Activated CD8-positive, alpha-beta T cell treated with anti-CD3 and anti-CD28 coated beads for 36 hours (primary cell): ENCODE measurements at regions of chr1 and their contacts with region 1.

Region 1: GRCh38 chr1:42173155-42173933 is 8.8 kb upstream of the GUCA2A start:
- DNase-seq: peak; percentile 72
- ATAC-seq: peak; percentile 92
- H3K4me3 Mint-ChIP-seq: no peak overlapping the region
- H3K27ac Mint-ChIP-seq: no peak overlapping the region
- H3K4me1 Mint-ChIP-seq: no peaks in the 10 kb centered on the region
- H3K27me3 Mint-ChIP-seq: no peaks in the 10 kb centered on the region
- CTCF ChIP-seq: peak; percentile 91

Region 2: DNA sequence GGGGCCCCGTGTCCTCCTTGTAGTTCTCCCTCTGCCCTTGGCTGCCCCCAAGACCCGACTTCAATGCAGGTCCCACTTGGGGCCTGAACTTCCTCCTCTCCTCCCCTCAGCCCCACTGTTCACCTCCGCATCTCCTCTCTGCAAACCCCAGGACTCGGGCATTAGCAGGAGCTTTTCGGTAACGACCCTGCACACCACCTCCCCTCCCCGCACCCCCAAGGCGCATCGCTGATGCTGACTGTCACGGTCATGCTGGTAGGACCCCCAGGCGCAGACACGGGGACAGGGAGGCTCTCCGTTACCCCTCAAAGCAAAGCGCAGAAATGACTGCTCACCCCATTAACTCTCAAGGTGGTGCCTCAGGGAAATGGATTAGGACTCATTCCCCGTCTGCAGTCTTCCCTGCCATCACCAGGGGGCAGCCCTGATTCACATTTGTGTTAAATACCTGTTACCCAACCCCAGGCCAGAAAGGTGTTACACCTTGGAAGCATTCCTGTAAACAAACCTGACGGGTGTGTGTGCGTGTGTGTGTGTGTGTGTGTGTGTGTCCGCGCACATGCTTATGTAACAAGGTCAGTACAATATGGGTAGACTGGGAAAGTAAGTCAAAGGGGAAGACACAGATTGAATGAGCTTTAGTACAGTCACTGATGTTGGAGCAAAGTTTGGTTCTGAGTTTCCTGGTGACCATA is 26.6 kb before region 1 on chr1:
- CTCF ChIA-PET with region 1: interaction called, 36 read pairs
- POLR2A ChIA-PET with region 1: no interaction called
- intact Hi-C with region 1: no loop called
- DNase-seq: peak; percentile 84
- ATAC-seq: peak; percentile 90
- H3K4me3 Mint-ChIP-seq: no peak overlapping the region
- H3K27ac Mint-ChIP-seq: no peak overlapping the region
- H3K4me1 Mint-ChIP-seq: peaks cover 6% of the 10 kb centered on the region
- H3K27me3 Mint-ChIP-seq: peaks cover 21% of the 10 kb centered on the region
- CTCF ChIP-seq: peak; percentile 70

Region 3: GRCh38 chr1:42152119-42152518 is 21.2 kb before region 1 on chr1:
- CTCF ChIA-PET with region 1: interaction called, 36 read pairs
- POLR2A ChIA-PET with region 1: no interaction called
- intact Hi-C with region 1: no loop called
- DNase-seq: no peak
- ATAC-seq: no peak
- H3K4me3 Mint-ChIP-seq: no peak overlapping the region
- H3K27ac Mint-ChIP-seq: no peak overlapping the region
- H3K4me1 Mint-ChIP-seq: no peaks in the 10 kb centered on the region
- H3K27me3 Mint-ChIP-seq: peaks cover 2% of the 10 kb centered on the region
- CTCF ChIP-seq: no peak

Region 4: GRCh38 chr1:42157667-42158066 is 15.7 kb before region 1 on chr1:
- CTCF ChIA-PET with region 1: interaction called, 53 read pairs
- POLR2A ChIA-PET with region 1: interaction called, 3 read pairs
- intact Hi-C with region 1: no loop called
- DNase-seq: peak; percentile 27
- ATAC-seq: peak; percentile 53
- H3K4me3 Mint-ChIP-seq: no peak overlapping the region
- H3K27ac Mint-ChIP-seq: no peak overlapping the region
- H3K4me1 Mint-ChIP-seq: no peaks in the 10 kb centered on the region
- H3K27me3 Mint-ChIP-seq: peaks cover 2% of the 10 kb centered on the region
- CTCF ChIP-seq: no peak

Region 5: GRCh38 chr1:42186152-42186551 is 12.8 kb after region 1 on chr1:
- CTCF ChIA-PET with region 1: interaction called, 18 read pairs
- POLR2A ChIA-PET with region 1: interaction called, 4 read pairs
- intact Hi-C with region 1: no loop called
- DNase-seq: no peak
- ATAC-seq: no peak
- H3K4me3 Mint-ChIP-seq: no peak overlapping the region
- H3K27ac Mint-ChIP-seq: peak overlapping the region; percentile 11
- H3K4me1 Mint-ChIP-seq: peaks cover 5% of the 10 kb centered on the region
- H3K27me3 Mint-ChIP-seq: no peaks in the 10 kb centered on the region
- CTCF ChIP-seq: no peak

Region 6: GRCh38 chr1:42420911-42421585 is 247.7 kb after region 1 on chr1:
- CTCF ChIA-PET with region 1: no interaction called
- POLR2A ChIA-PET with region 1: no interaction called
- intact Hi-C with region 1: no loop called
- DNase-seq: no peak
- ATAC-seq: no peak
- H3K4me3 Mint-ChIP-seq: no peak overlapping the region
- H3K27ac Mint-ChIP-seq: no peak overlapping the region
- H3K4me1 Mint-ChIP-seq: no peaks in the 10 kb centered on the region
- H3K27me3 Mint-ChIP-seq: no peaks in the 10 kb centered on the region
- CTCF ChIP-seq: no peak

Region 7: GRCh38 chr1:42484382-42484781 is 311.0 kb after region 1 on chr1:
- CTCF ChIA-PET with region 1: interaction called, 13 read pairs
- POLR2A ChIA-PET with region 1: no interaction called
- intact Hi-C with region 1: no loop called
- DNase-seq: no peak
- ATAC-seq: no peak
- H3K4me3 Mint-ChIP-seq: no peak overlapping the region
- H3K27ac Mint-ChIP-seq: no peak overlapping the region
- H3K4me1 Mint-ChIP-seq: no peaks in the 10 kb centered on the region
- H3K27me3 Mint-ChIP-seq: no peaks in the 10 kb centered on the region
- CTCF ChIP-seq: no peak

Region 8: DNA sequence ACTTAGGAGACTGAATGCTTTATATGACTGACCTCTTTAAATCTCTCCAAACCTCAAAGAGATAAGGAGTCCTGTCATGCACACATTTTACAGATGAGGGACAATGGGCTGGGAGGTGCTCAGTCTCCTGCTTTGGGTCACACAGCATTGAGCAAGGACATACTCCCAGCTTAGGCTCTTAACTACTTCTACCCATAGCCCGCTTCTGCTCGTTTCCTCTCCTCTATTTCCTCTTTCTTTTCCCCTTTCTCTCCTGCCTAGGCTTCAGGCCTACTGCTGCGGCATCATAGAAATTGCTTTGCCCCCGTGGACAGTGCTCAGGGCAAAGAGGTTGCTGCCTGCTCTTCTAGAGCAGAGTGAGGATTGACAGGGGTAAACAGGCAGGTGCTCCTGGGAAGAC is 660.6 kb after region 1 on chr1:
- CTCF ChIA-PET with region 1: no interaction called
- POLR2A ChIA-PET with region 1: no interaction called
- intact Hi-C with region 1: no loop called
- DNase-seq: no peak
- ATAC-seq: no peak
- H3K4me3 Mint-ChIP-seq: no peak overlapping the region
- H3K27ac Mint-ChIP-seq: no peak overlapping the region
- H3K4me1 Mint-ChIP-seq: no peaks in the 10 kb centered on the region
- H3K27me3 Mint-ChIP-seq: no peaks in the 10 kb centered on the region
- CTCF ChIP-seq: no peak